RWPE1 (cell line): ENCODE measurements at regions of chr7 and their contacts with region 1.

Region 1: DNA sequence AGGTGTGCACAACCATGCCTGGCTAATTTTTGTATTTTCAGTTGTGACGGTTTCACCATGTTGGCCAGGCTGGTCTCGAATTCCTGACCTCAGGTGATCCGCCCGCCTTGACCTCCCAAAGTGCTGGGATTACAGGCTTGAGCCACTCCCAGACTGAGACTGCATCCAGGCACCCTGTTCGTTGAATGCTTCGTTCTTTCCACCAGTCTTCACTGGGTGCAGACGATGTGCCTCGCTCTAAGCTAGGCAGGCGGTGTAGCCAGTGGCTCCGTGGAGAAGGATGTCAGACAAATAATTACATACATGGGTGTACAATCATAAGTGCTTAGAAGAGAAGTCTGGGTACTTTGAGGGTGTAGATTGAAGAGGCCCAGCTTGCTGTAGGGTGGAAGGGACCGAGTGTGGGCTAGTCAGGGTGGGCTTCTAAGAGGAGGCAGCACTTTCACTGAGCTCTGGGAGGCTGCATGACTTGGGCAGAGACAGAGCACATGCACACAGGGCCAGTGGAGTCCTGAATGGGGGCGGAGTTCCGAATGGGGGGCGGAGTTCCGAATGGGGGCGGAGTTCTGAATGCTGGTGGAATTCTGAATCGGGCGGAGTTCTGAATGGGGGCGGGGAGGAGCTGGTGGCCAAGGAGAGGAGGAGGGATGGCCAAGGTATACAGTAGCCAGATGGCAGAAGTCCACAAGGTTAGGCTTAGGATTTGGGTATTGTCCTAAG is 74.3 kb downstream of the COL26A1 start:
- DNase-seq: peak; percentile 35
- H3K27ac ChIP-seq: no peak overlapping the region
- CTCF ChIP-seq: no peak

Region 2: GRCh38 chr7:101108330-101108857 is 328.6 kb before region 1 on chr7:
- CTCF ChIA-PET with region 1: no interaction called
- POLR2A ChIA-PET with region 1: no interaction called
- DNase-seq: no peak
- H3K27ac ChIP-seq: peak overlapping the region; percentile 88
- CTCF ChIP-seq: no peak

Region 3: DNA sequence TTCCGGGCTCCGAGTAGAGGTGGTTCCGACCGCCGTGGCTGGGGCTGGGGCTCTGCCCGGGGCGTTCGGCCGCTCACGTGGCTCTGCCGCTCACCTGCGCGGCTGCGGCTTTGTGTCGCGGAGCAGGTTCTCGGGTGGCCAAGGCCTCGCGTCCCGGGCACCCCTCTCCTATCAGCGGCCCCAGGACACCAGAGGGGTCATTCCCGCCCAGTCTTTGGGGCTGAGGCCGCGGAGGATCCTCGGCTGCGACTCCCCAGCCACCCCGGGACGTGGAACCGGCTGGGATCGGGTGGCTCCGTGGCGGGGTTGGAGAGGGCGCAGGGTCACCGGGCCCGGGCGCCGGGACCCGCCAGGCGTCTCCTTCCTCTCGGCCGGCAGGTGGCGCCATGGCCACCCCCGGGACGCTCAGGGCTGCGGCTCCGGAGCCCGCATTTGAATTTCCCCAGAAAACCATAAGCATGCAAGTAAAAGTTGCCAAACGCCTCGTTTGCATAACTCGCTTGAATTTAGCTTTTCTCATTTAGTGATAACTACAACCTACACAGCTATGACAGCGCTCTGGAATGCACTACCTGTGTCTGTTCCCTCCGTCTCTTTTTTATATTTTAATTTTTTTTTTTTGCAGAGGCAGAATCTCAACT is 73.2 kb before region 1 on chr7:
- CTCF ChIA-PET with region 1: interaction called, 11 read pairs
- POLR2A ChIA-PET with region 1: no interaction called
- DNase-seq: peak; percentile 79
- H3K27ac ChIP-seq: no peak overlapping the region
- CTCF ChIP-seq: peak; percentile 98

Region 4: DNA sequence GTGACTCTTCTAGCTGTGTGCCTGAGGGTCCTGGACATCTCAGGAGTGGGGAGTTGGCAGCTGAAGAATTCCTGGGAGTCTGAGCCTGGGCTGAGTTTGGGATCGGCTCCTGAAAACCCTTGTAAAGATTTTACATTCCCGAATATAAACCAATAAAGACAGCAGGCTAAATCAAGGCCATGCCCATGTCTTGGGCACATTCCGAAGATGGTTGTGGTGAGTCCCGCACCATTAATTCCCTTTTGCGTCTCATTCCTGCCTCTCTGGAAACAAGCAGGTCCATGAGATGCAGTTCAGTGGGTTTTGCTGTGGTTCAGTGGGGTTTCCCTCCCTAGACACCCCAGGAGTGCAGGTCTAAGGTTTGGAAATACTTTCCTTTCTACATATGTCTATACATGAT is 16.6 kb after region 1 on chr7:
- CTCF ChIA-PET with region 1: no interaction called
- POLR2A ChIA-PET with region 1: no interaction called
- DNase-seq: no peak
- H3K27ac ChIP-seq: no peak overlapping the region
- CTCF ChIP-seq: no peak